T-cell (primary cell): ENCODE measurements at regions of chr22 and their contacts with region 1.

Region 1: GRCh38 chr22:41940832-41941765 is 5.9 kb downstream of the CENPM start:
- DNase-seq: peak; percentile 70 to 92 (median 83)
- ATAC-seq: peak; percentile 54 to 79 (median 70)
- H3K4me3 ChIP-seq: peak overlapping the region in 1 of 2 donors; percentile 14
- H3K4me3 Mint-ChIP-seq: peak overlapping the region; percentile 72 to 92 (median 88)
- H3K27ac ChIP-seq: peak overlapping the region; percentile 99
- H3K27ac Mint-ChIP-seq: peak overlapping the region; percentile 100
- H3K4me1 ChIP-seq: peaks cover 5 to 48% of the 10 kb centered on the region in 2 experiments
- H3K4me1 Mint-ChIP-seq: peaks cover 35 to 55% (median 47%) of the 10 kb centered on the region in 3 donors
- H3K27me3 ChIP-seq: no peaks in the 10 kb centered on the region
- H3K27me3 Mint-ChIP-seq: no peaks in the 10 kb centered on the region

Region 2: GRCh38 chr22:41697126-41697775 is 243.8 kb before region 1 on chr22:
- CTCF ChIA-PET with region 1: interaction called, 4 to 20 read pairs
- POLR2A ChIA-PET with region 1: interaction called in 1 of 2 experiments, 4 read pairs
- DNase-seq: peak; percentile 59 to 95 (median 86)
- ATAC-seq: peak; percentile 67 to 76 (median 74)
- H3K4me3 ChIP-seq: peak overlapping the region; percentile 18 to 29
- H3K4me3 Mint-ChIP-seq: peak overlapping the region; percentile 23 to 70 (median 64)
- H3K27ac ChIP-seq: peak overlapping the region; percentile 35
- H3K27ac Mint-ChIP-seq: peak overlapping the region; percentile 77 to 80
- H3K4me1 ChIP-seq: peaks cover 2 to 19% of the 10 kb centered on the region in 2 experiments
- H3K4me1 Mint-ChIP-seq: peaks cover 11 to 14% (median 13%) of the 10 kb centered on the region in 3 donors
- H3K27me3 ChIP-seq: no peaks in the 10 kb centered on the region
- H3K27me3 Mint-ChIP-seq: peaks cover 0 to 1% of the 10 kb centered on the region in 2 donors

Region 3: GRCh38 chr22:41746567-41747400 is 194.3 kb before region 1 on chr22:
- CTCF ChIA-PET with region 1: interaction called, 5 to 10 read pairs
- POLR2A ChIA-PET with region 1: no interaction called
- DNase-seq: peak; percentile 4 to 78 (median 33)
- ATAC-seq: peak; percentile 82 to 94 (median 84)
- H3K4me3 ChIP-seq: no peak overlapping the region
- H3K4me3 Mint-ChIP-seq: no peak overlapping the region
- H3K27ac ChIP-seq: no peak overlapping the region
- H3K27ac Mint-ChIP-seq: no peak overlapping the region
- H3K4me1 ChIP-seq: peaks cover 0 to 4% of the 10 kb centered on the region in 2 experiments
- H3K4me1 Mint-ChIP-seq: peaks cover 0 to 5% (median 3%) of the 10 kb centered on the region in 3 donors
- H3K27me3 ChIP-seq: peaks cover 0 to 11% of the 10 kb centered on the region in 2 experiments
- H3K27me3 Mint-ChIP-seq: peaks cover 3 to 11% of the 10 kb centered on the region in 2 donors

Region 4: DNA sequence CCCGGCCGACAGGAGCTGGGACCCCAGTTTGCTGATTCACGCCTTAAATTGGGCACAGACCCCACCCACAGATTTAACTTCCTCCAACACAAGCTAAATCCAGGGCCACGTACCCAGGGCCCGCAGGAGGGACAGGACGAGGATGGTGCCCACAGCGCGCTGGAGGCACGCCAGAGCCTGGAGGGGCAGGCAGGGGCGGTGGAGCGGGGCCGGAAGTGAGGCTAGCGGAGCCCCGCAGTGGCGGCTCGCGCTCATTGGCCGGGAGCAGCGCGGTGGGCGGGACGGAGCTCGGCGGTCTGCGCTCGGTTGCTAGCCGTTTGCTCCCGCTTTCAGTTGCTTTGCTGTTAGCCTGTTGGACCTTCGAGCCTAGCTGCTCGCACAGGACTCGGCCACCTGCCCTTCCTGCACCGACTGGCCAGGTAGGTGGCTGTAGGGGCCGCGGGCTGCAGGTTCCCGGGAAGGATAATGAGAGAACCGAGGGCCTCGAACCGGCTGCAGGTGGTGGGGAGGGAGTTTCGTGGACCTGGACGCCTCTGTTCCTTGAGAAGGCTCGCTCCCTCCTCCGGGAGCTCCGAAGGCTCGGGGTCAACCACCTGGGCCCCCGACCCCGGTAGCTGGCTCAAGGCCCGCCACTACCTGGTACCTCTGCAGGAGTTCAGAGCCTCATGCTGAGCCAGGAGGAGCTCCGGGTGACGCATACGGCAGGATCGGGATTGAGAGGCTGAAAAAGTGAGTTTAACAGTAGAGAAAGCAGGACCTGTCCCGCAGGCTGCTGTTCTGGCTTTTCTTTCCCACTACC is 140.6 kb before region 1 on chr22 and contains the start of gene CCDC134:
- CTCF ChIA-PET with region 1: interaction called in 1 of 2 experiments, 9 read pairs
- POLR2A ChIA-PET with region 1: interaction called in 1 of 2 experiments, 10 read pairs
- DNase-seq: peak; percentile 83 to 94 (median 89)
- ATAC-seq: peak; percentile 97 to 99 (median 98)
- H3K4me3 ChIP-seq: peak within 1 kb of the TSS; percentile 92 to 96
- H3K4me3 Mint-ChIP-seq: peak within 1 kb of the TSS; percentile 93 to 97 (median 96)
- H3K27ac ChIP-seq: peak within 1 kb of the TSS; percentile 92
- H3K27ac Mint-ChIP-seq: peak within 1 kb of the TSS; percentile 98 to 99
- H3K4me1 ChIP-seq: peaks cover 13 to 36% of the 10 kb centered on the region in 2 experiments
- H3K4me1 Mint-ChIP-seq: peaks cover 38 to 52% (median 48%) of the 10 kb centered on the region in 3 donors
- H3K27me3 ChIP-seq: no peaks in the 10 kb centered on the region
- H3K27me3 Mint-ChIP-seq: no peaks in the 10 kb centered on the region
- total RNA-seq, gene CCDC134: 14.4 to 21.7 (median 16.7) TPM

Region 5: DNA sequence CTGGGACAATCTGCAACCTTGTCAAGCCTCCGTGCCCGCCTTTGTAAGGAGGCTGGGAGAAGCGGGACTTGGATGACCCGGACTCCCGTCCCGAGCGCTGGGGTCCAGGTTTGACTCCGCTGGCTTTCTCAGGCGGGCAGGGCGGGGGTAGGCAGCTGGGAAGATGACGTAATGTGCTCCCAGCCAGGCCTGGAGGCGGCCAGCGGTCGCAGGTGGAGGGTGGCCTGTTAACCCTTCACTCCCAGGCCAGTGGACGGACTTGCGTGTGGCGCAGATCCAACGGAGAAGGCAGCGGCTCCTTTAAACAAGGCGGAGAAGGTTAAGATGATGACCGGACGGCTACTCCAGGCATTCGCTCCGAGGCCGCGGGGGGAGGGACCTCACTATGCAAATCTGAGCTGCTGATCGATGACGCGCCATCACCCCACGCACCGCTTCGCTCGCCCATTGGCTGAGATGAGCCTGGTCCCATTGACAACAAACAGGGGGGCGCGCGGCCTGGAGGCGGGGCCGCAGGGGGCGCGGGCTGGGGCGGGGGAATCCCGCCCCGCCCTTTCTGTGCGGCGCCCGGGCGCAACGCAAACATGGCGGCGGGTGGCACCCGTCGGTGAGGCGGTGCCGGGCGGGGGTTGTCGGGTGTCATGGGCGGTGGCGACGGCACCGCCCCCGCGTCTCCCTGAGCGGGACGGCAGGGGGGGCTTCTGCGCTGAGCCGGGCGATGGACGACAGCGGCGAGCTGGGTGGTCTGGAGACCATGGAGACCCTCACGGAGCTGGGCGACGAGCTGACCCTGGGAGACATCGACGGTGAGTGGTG is 108.3 kb before region 1 on chr22 and contains the start of gene SREBF2:
- CTCF ChIA-PET with region 1: interaction called in 1 of 2 experiments, 8 read pairs
- POLR2A ChIA-PET with region 1: interaction called, 4 to 19 read pairs
- DNase-seq: peak; percentile 94 to 100 (median 99)
- ATAC-seq: peak; percentile 93 to 94 (median 94)
- H3K4me3 ChIP-seq: peak within 1 kb of the TSS; percentile 94 to 99
- H3K4me3 Mint-ChIP-seq: peak within 1 kb of the TSS; percentile 88 to 96 (median 93)
- H3K27ac ChIP-seq: peak within 1 kb of the TSS; percentile 100
- H3K27ac Mint-ChIP-seq: peak within 1 kb of the TSS; percentile 99 to 100
- H3K4me1 ChIP-seq: peaks cover 2 to 12% of the 10 kb centered on the region in 2 experiments
- H3K4me1 Mint-ChIP-seq: peaks cover 21 to 41% (median 37%) of the 10 kb centered on the region in 3 donors
- H3K27me3 ChIP-seq: no peaks in the 10 kb centered on the region
- H3K27me3 Mint-ChIP-seq: no peaks in the 10 kb centered on the region
- total RNA-seq, gene SREBF2: 71.9 to 128 (median 112) TPM

Region 6: DNA sequence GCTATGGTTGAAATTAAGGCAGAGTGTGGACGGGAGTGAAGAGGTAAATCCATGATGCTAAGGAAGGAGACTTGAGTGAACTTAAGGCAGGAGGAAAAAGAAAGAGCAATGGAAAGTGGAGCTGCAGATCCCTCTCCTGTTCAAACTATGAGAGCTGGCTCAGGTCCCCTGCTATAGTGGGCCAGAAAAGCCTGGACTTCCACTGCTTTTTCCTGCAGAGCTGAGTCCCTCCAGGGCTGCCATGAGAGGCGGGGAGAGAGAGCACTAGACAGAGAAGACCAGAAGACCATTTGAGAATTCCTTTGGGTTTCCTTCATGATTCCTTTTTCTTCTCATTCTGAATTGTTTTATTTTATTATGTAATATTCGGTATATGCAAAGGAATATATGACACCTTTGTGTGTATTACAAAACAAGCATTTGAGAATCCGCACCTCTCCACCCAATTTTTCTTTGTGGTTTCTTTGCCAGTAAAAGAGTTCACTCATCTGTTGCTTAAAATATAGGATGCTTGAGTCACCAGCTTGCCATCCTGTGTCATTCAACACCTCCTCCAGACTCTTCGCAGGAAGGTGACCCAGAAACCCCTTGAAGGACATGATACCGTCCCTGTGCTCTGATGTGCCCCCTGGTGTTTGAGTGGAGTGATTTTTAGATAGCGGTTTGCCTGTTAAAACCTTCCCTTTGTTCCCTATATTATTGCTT is 83.8 kb before region 1 on chr22:
- CTCF ChIA-PET with region 1: interaction called, 3 to 21 read pairs
- POLR2A ChIA-PET with region 1: interaction called in 1 of 2 experiments, 7 read pairs
- DNase-seq: peak; percentile 22 to 87 (median 62)
- ATAC-seq: peak; percentile 50 to 74 (median 62)
- H3K4me3 ChIP-seq: no peak overlapping the region
- H3K4me3 Mint-ChIP-seq: peak overlapping the region; percentile 1 to 39 (median 17)
- H3K27ac ChIP-seq: peak overlapping the region; percentile 42
- H3K27ac Mint-ChIP-seq: peak overlapping the region; percentile 62 to 85
- H3K4me1 ChIP-seq: peaks cover 11 to 36% of the 10 kb centered on the region in 2 experiments
- H3K4me1 Mint-ChIP-seq: peaks cover 47 to 72% (median 67%) of the 10 kb centered on the region in 3 donors
- H3K27me3 ChIP-seq: no peaks in the 10 kb centered on the region
- H3K27me3 Mint-ChIP-seq: no peaks in the 10 kb centered on the region

Region 7: DNA sequence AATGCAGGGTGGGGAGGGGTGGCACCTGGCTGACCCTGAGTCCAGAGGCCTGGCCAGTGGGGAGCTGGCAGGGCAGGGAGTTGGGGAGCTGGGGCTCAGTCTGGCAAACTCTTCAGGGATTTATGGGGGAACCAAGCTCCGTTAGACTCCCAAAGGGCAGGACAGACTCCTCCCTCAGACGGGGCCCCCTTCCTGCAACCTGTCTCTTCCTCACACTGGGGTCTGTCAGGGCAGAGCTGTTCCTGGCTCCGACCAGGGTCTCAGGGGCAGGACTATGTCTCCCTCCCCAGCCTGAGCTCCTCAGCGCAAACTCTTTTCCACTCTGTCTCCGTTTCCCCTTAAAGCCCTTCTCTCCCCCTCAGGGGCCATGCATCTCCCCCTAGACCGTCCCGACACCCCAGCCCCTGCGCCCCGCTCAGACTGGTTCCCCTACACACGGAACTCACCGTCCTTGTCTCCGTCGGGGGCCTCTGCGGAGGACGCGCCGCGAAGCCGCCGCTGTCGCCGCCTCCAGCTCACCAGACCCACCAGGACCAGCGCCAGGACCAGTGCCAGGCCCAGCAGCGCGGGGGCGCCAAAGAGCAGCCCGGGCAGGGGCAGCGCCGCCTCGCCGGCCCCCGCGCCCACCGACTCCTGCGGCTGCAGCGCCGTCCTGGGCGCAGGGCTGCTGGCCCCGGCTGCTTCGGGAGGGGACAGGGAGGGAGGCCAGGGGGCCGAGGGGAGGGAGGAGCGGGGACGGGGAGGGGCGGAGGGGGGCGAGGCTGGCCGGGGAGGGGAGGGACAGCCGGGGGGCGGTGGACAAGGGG is 15.2 kb before region 1 on chr22:
- CTCF ChIA-PET with region 1: interaction called, 4 to 48 read pairs
- POLR2A ChIA-PET with region 1: interaction called, 4 to 5 read pairs
- DNase-seq: peak; percentile 39 to 86 (median 69)
- ATAC-seq: peak; percentile 81 to 87 (median 86)
- H3K4me3 ChIP-seq: peak overlapping the region; percentile 32 to 37
- H3K4me3 Mint-ChIP-seq: peak overlapping the region; percentile 78 to 79 (median 79)
- H3K27ac ChIP-seq: no peak overlapping the region
- H3K27ac Mint-ChIP-seq: peak overlapping the region; percentile 39 to 69
- H3K4me1 ChIP-seq: peaks cover 0 to 34% of the 10 kb centered on the region in 2 experiments
- H3K4me1 Mint-ChIP-seq: peaks cover 16 to 24% (median 21%) of the 10 kb centered on the region in 3 donors
- H3K27me3 ChIP-seq: peaks cover 0 to 19% of the 10 kb centered on the region in 2 experiments
- H3K27me3 Mint-ChIP-seq: no peaks in the 10 kb centered on the region